ENCODE measurements at regions of chr1 and their contacts with region 1.

Region 1: DNA sequence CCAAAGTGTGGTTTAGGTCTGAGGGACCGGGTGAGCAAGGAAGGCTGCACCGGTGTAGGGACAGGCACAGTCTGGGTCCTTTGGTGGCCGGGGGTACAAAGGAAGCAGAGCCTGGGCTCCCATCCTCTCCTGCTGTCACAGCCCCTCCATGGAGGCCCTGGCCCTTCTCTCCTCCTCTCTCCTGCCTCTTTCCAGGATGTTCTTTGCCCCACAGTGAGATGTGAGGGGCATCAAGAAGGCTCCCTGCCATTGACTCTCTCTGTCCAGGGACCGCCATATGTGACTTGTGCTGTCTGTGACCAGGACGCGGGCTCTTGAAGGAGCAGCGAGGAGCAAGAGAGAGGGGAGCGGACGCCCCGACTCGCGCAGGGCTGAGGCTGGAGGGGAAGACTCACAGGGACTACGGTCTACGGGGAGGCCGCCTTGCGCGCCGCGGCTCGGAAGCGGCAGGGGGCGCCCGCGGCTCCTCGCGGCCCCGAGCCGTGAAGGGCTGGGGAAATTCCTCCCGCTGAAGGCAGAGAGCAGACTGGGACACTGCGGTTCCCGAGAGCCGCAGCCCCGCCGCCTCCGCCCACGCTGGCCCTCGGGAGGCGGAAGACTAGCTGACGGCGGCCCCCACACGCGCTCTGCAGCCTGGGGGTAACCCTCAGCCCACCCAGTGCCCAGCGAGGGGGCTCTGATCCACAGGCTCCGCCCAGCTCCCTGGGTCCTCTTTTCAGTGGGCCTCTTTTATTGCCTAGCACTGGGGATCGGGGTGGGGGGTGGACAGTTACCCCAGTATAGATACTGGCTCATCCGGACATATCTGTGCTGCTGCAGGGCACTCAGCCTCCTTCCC is 40.8 kb downstream of the MAB21L3 start:
- DNase-seq: peak; percentile 84
- ATAC-seq: peak; percentile 97

Region 2: GRCh38 chr1:116360429-116361173 is 208.6 kb after region 1 on chr1:
- intact Hi-C with region 1: loop called (anchors 10 kb)
- DNase-seq: no peak
- ATAC-seq: peak; percentile 42